Ascending aorta (tissue), 2 donors: ENCODE measurements at regions of chr19 and their contacts with region 1.

Region 1: GRCh38 chr19:45994989-45995714 is at the start of gene CCDC61:
- DNase-seq: peak; percentile 87 to 97
- H3K4me3 ChIP-seq: peak within 1 kb of the TSS; percentile 85 to 91
- H3K27ac ChIP-seq: peak within 1 kb of the TSS; percentile 66 to 69
- H3K4me1 ChIP-seq: peaks cover 0 to 6% of the 10 kb centered on the region in 2 donors
- H3K27me3 ChIP-seq: no peaks in the 10 kb centered on the region
- CTCF ChIP-seq: no peak
- total RNA-seq, gene CCDC61: 13.7 TPM

Region 2: DNA sequence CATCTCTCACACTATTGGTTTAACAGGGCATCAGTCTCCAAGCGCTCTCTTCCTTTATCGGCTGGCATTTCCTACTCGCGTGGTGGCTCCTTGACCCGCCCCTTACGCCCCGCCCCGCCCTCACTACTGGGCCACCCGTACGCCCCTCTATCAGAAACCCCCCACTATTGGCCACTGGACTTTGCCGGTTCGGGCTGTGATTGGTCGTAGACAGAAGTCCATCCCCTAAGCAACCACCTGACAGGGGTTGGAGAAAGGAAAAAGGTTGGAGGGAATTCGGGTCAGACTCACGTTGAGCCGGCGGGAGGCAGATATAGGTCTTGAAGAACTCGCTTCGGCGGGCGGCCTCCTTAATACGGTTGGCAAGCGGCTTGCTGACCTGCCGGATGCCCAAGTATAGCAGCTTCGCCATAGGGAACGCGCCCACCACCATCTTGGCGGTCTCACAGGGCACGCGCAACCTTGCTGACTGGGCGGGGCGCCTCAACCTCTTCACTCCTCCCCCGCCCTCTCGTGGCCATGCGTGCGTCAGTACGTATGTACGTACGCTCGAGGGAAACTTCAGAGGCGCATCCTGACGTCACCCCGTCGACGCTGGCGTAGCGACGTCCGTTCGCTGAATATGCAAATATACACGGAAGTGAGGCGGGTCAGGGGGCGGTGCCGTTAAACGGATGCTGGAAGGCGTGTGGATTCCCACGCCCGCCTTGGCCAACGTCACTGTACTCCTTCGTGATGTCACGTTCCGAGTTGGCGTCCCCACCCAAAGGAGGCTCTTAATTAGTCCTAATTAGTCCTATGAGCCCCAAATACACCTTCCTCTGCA is 410.6 kb before region 1 on chr19 and contains the start of gene OPA3:
- intact Hi-C with region 1: loop called (anchors 10 kb)
- DNase-seq: peak; percentile 99 to 100
- H3K4me3 ChIP-seq: peak within 1 kb of the TSS; percentile 67
- H3K27ac ChIP-seq: peak within 1 kb of the TSS; percentile 95 to 97
- H3K4me1 ChIP-seq: peaks cover 0 to 10% of the 10 kb centered on the region in 2 donors
- H3K27me3 ChIP-seq: no peaks in the 10 kb centered on the region
- CTCF ChIP-seq: no peak
- total RNA-seq, gene OPA3: 4.5 TPM

Region 3: DNA sequence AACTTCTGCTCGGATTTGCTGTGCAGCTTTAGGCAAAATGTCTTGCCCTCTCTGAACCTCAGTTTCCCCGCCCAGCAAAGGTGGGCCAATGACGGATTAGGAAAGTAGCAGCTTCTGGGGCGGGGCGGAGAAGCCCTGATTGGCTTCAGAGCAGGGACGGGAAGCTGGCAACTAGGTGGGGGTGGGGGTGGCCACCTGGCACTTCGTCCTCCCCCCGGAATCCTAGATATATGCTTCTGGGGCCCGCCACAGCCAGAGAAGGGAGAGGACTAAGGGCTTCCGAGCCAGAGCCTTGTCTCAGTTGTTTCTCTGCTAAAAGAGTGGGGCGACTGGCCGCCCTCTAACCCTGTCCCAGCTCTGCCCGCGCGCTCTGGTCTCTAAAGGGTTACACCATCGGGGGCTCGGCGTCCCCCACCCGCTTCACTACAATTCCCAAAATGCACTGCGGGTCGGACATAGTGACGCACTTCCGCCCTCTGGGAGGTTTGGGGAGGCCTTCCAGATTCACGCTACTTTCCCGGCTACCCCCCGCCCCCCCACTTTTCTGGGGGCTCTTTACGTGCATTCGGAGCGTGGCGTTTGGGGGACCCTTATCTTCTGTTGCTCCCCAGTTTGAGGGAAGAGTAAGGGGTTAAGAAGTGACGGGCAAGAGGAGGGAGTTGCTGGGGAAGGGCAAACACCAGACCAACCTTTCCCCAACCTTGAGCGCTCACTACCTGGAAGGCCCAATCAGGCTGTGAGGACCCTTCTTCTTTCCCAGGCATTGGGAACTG is 108.5 kb before region 1 on chr19:
- intact Hi-C with region 1: loop called (anchors 1 kb)
- DNase-seq: peak; percentile 64 to 96
- H3K4me3 ChIP-seq: peak overlapping the region; percentile 71 to 95
- H3K27ac ChIP-seq: peak overlapping the region; percentile 87 to 88
- H3K4me1 ChIP-seq: peaks cover 22 to 37% of the 10 kb centered on the region in 2 donors
- H3K27me3 ChIP-seq: no peaks in the 10 kb centered on the region
- CTCF ChIP-seq: no peak

Region 4: DNA sequence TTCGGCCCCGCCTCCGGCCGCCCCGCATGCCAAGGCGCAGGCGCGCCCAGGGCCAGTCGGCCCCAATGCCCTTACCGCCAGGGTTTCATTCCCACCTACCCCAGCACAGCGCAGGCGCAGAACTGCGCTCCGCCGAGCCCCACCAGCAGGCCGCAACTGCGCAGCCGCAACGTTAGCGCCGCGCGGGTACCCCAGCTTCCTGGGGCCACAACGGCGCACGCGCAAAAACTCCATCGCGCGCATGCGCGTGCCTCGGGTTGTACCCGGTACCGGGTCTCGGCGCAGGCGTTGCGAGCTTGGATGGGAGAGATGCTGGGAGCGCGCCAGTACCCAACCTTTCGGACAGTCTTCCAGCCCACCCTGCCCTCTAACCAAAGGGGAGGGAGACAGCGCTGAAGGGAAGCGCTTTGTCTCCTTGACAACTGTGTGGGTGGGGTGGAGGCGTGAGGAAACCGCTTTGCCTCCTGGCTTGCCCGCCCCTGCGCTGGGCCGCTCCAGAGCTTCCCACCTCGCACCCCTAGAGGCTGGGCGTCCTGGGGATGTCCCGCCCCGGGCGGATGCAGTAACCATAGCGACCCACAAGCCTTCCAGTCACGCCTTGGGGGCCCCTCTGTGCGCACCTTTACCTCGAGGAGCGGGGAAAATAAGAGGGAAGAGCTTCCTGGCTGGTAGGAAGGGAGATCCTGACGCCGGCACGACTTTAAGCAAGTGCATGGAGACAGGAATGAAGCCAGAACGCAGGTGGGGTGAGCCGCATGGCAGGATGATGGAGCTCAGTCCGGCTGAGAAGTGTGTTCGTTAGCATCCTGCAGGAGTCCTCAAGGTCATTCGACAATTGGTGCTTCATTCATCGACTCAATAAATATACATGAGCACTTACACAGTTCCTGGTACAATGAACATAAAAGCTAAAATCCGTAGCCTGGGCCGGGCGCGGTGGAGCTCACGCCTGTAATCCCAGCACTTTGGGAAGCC is 92.2 kb before region 1 on chr19:
- intact Hi-C with region 1: loop called (anchors 2 kb)
- DNase-seq: peak; percentile 88 to 99
- H3K4me3 ChIP-seq: peak overlapping the region; percentile 72 to 86
- H3K27ac ChIP-seq: peak overlapping the region; percentile 39 to 57
- H3K4me1 ChIP-seq: peaks cover 7 to 9% of the 10 kb centered on the region in 2 donors
- H3K27me3 ChIP-seq: no peaks in the 10 kb centered on the region
- CTCF ChIP-seq: no peak

Region 5: DNA sequence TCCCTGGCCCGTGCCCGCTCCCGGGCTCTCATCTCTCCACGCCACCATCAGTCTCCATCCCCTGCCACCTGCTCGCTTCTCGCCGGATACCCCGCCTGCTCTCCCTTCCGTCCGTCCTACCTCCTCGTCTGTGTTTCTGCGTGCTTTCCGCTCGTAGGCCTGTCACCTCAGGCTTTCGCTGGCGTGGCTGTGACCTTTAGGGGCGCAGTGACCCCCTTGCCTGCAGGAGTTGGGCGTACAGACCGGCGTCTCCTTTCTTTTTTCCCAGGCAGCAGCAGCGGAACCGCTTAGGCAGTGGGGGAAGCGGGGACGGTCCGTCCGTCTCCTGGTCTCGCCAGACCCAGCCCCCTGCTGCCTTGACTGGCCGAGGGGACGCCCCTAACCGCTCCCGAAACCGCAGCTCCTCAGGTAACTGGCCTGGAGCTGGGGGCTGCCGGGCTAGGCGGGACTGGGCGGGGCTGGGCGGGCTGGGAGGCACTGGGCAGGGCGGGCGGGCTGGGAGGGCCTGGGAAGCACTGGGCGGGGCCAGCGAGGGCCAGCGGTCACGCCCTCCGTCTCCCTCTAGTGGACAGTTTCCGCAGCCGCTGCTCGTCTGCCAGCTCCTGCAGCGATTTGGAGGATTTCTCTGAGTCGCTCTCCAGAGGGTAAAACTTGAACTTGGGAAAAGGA is 21.4 kb after region 1 on chr19:
- intact Hi-C with region 1: loop called (anchors 1 kb)
- DNase-seq: peak in 1 of 2 donors; percentile 83
- H3K4me3 ChIP-seq: peak overlapping the region; percentile 76 to 80
- H3K27ac ChIP-seq: peak overlapping the region in 1 of 2 donors; percentile 37
- H3K4me1 ChIP-seq: peaks cover 12 to 17% of the 10 kb centered on the region in 2 donors
- H3K27me3 ChIP-seq: no peaks in the 10 kb centered on the region
- CTCF ChIP-seq: peak; percentile 75 to 96 (median 90)

Region 6: GRCh38 chr19:46030812-46031550 is 35.8 kb after region 1 on chr19:
- intact Hi-C with region 1: no loop called
- DNase-seq: no peak
- H3K4me3 ChIP-seq: no peak overlapping the region
- H3K27ac ChIP-seq: no peak overlapping the region
- H3K4me1 ChIP-seq: no peaks in the 10 kb centered on the region
- H3K27me3 ChIP-seq: no peaks in the 10 kb centered on the region
- CTCF ChIP-seq: no peak